ENCODE measurements at regions of chr11 and their contacts with region 1.

Region 1: GRCh38 chr11:119666463-119667131 is 62.4 kb downstream of the NECTIN1 start:
- DNase-seq: peak; percentile 60
- ATAC-seq: peak; percentile 99
- H3K4me3 ChIP-seq: no peak overlapping the region
- H3K27ac ChIP-seq: no peak overlapping the region
- H3K4me1 ChIP-seq: no peaks in the 10 kb centered on the region
- H3K27me3 ChIP-seq: no peaks in the 10 kb centered on the region
- CTCF ChIP-seq: peak; percentile 97

Region 2: DNA sequence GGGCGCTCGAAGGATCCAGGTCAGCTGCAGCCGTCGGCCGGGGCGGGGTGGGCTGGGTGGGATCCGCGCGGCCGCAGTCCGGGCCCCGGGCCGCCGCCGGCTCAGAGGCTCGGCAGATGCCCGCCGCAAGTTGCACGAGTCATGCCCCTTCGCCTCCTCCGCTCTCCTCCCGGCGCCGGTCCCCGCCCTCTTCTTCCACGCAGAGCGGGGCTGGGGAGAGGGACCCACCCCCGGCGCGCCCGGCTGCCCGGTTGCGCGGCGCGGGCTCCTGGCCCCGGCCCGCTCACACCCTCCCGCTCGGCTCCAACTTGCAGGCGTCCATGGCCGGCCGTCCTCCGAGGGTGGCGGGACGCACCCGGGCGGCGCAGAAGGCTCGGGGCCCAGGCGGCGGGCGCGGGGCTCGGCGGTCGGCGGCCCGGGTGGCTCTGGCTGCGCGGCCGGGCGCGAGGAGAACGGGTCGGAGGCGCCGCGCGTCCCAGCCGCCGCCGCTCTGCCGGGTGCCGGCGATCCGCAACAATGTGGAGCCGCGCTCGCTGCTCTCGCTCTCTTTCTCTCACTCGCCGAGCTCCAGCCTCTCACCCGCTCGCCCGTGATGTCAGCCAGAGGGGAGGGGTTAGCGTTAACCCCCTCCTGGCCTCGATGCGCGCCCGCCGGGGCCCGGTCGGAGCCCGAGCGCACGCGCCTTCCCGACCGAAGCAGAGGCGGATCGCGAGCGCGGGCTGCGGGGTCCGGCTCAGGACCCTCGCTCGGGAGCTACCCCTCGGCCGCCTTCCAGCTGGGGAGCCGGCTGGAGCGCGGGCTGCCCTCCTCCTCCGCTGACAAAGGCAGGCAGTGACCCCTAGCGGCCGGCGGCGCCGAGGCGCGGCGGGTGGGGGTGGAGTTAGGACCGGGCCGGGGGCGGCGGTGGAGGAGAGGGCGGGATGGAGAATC is 62.3 kb after region 1 on chr11 and contains the start of gene NECTIN1:
- CTCF ChIA-PET with region 1: interaction called, 3 read pairs
- POLR2A ChIA-PET with region 1: no interaction called
- in situ Hi-C with region 1: no loop called
- intact Hi-C with region 1: loop called (anchors 2 kb)
- DNase-seq: peak; percentile 39
- ATAC-seq: peak; percentile 96
- H3K4me3 ChIP-seq: peak within 1 kb of the TSS; percentile 51 to 65
- H3K27ac ChIP-seq: peak within 1 kb of the TSS; percentile 71
- H3K4me1 ChIP-seq: peaks cover 15% of the 10 kb centered on the region
- H3K27me3 ChIP-seq: peaks cover 6% of the 10 kb centered on the region
- CTCF ChIP-seq: peak; percentile 100
- total RNA-seq, gene NECTIN1: 14.6 TPM

Region 3: DNA sequence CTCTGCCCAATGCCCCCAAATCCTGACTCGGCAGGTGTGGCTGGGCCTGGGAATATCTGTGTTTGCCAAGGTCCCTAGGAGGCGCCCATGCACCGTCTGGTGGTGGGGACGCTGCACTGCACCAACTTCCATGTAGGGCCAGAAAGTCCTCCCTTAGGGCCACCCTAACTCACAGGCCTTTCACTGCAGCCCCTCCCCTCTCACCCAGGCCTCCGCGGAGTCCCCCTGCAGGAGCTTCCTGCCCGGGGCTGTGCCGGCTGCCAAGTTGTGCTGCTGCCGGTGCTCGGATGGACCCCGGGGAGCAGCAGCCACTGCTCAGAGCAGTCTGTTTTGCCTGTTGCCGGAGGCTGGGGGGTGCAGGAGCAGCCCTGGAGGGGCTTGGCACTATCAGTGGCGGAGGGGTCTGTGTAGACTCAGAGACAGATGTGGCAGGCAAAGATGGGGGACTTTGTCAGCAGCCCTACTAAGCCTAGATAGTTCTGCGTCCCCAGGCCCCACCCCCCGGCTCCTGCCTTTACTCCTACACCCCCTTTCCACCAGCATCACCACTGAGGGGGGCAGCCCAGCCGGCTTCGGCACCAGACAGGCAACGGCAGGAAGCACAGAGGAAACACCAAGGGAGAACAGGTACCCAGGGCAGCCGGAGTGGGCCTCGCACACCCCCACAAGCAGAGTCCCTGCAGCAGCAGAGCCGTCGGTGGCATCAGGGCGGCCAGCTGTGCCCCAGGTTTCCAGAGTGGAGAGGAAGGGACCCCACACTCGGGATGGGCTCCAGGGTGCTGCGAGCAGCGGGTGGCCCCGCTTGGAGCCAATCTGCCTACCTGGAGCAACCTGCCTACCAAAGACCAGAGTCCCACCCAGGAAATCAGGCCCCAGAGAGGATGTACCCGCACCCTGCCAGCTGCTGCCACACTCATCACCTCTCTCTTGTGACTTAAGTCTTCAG is 347.0 kb after region 1 on chr11:
- CTCF ChIA-PET with region 1: no interaction called
- POLR2A ChIA-PET with region 1: no interaction called
- in situ Hi-C with region 1: no loop called
- intact Hi-C with region 1: loop called (anchors 1 kb)
- DNase-seq: peak; percentile 8
- ATAC-seq: peak; percentile 92
- H3K4me3 ChIP-seq: no peak overlapping the region
- H3K27ac ChIP-seq: no peak overlapping the region
- H3K4me1 ChIP-seq: no peaks in the 10 kb centered on the region
- H3K27me3 ChIP-seq: peaks cover 59% of the 10 kb centered on the region
- CTCF ChIP-seq: peak; percentile 95

Region 4: GRCh38 chr11:120108154-120108865 is 441.7 kb after region 1 on chr11:
- CTCF ChIA-PET with region 1: interaction called, 6 read pairs
- POLR2A ChIA-PET with region 1: no interaction called
- in situ Hi-C with region 1: no loop called
- intact Hi-C with region 1: loop called (anchors 1 kb)
- DNase-seq: peak; percentile 56
- ATAC-seq: peak; percentile 91
- H3K4me3 ChIP-seq: no peak overlapping the region
- H3K27ac ChIP-seq: no peak overlapping the region
- H3K4me1 ChIP-seq: no peaks in the 10 kb centered on the region
- H3K27me3 ChIP-seq: peaks cover 7% of the 10 kb centered on the region
- CTCF ChIP-seq: peak; percentile 100

Region 5: GRCh38 chr11:120172054-120172911 is 505.7 kb after region 1 on chr11:
- CTCF ChIA-PET with region 1: no interaction called
- POLR2A ChIA-PET with region 1: no interaction called
- in situ Hi-C with region 1: no loop called
- intact Hi-C with region 1: loop called (anchors 5 kb)
- DNase-seq: peak; percentile 30
- ATAC-seq: peak; percentile 70
- H3K4me3 ChIP-seq: no peak overlapping the region
- H3K27ac ChIP-seq: no peak overlapping the region
- H3K4me1 ChIP-seq: 0 out of 2 replicates have a peak, but pooled peaks cover 4% of the 10 kb centered on the region
- H3K27me3 ChIP-seq: peaks cover 45% of the 10 kb centered on the region
- CTCF ChIP-seq: peak; percentile 89

Measured in Panc1 (cell line).